Activated CD4-positive, alpha-beta T cell treated with anti-CD3 and anti-CD28 coated beads for 36 hours (primary cell): ENCODE measurements at regions of chr3 and their contacts with region 1.

Region 1: DNA sequence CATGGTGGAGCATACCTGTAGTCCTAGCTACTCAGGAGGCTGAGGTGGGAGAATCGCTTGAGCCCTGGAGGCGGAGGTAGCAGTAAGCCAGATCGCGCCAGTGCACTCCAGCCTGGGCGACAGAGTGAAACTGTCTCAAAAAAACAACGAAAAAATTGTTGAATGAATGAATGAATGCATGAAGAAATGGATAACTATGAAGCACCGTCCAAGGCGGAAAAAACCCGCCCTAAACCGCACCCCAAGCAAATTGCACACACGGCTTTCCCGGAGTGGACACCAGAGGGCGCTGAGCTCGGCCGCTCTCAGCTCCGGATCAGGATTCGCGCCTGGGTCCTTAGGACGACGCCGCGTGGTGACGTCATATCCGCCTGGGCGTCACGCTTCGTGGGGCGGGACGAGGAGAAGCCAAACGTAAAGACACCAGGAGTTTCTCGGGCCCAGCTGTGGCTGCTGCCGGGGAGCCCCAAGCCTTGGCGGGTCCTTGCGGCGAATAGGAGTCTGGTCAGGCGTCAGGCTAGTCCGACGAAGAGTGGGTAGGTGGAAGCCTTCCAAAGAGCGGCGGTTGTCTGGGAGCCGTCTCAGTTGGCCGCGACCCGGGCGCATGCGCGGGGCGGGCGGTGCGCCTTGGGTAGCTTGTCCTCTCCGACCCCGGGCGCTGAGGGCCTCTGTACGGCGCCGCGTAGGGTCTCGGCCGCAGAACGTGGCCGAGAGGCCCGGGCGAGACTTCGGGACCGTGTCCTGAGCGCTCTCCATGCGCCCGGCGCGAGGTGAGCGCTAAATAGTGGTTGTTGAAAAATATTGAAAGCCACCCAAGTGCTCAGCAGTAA is at the starts of genes HTD2 and RPP14:
- DNase-seq: peak; percentile 99
- ATAC-seq: peak; percentile 90
- H3K4me3 Mint-ChIP-seq: peak within 1 kb of the TSS; percentile 97
- H3K27ac Mint-ChIP-seq: peak within 1 kb of the TSS; percentile 97
- H3K4me1 Mint-ChIP-seq: peaks cover 30% of the 10 kb centered on the region
- H3K27me3 Mint-ChIP-seq: peaks cover 2% of the 10 kb centered on the region
- total RNA-seq, gene HTD2: 2.3 to 7.9 TPM
- total RNA-seq, gene RPP14: 16.4 to 16.9 TPM

Region 2: DNA sequence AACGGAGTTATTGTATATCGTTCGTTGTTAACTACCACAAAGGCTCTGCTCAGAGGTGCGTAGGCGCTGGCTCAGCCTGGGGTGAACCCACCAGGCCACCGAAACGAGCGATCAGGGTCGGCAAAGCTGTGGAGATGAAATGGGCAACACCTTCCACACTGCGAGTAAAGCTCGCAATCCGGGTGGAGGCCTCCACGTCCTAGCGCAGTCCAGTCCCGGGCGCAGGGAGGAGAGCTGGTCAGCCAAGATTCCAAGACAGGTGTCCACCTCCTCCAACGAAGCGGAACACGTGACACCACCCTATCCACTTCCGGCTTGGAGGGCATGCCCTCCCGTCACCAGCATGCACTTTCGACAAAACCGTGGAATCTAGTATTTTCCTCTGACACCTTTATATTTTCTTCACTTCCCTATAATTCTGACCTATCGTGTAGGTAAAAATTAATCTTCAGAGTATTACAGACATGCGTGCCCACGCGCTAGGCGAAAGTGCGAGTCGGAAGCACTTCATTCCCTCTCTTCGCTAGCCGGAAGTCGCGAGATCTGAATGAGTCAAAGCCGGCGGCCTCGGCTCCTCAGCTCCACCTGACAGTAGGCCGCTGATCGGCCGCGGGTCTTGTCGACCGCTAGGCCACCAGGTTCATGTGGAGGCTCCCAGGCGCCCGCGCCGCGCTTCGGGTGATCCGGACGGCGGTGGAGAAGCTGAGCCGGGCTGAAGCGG is 750.2 kb before region 1 on chr3 and contains the start of gene PDE12:
- CTCF ChIA-PET with region 1: no interaction called
- POLR2A ChIA-PET with region 1: no interaction called
- intact Hi-C with region 1: loop called in 1 of 2 experiments (anchors 1 kb)
- DNase-seq: peak; percentile 91
- ATAC-seq: peak; percentile 82
- H3K4me3 Mint-ChIP-seq: peak within 1 kb of the TSS; percentile 91
- H3K27ac Mint-ChIP-seq: peak within 1 kb of the TSS; percentile 100
- H3K4me1 Mint-ChIP-seq: peaks cover 29% of the 10 kb centered on the region
- H3K27me3 Mint-ChIP-seq: no peaks in the 10 kb centered on the region
- total RNA-seq, gene PDE12: 19.2 to 19.9 TPM

Region 3: GRCh38 chr3:58177747-58178527 is 128.2 kb before region 1 on chr3:
- CTCF ChIA-PET with region 1: interaction called, 28 read pairs
- POLR2A ChIA-PET with region 1: no interaction called
- intact Hi-C with region 1: loop called in 1 of 2 experiments (anchors 5 kb)
- DNase-seq: peak; percentile 95
- ATAC-seq: peak; percentile 86
- H3K4me3 Mint-ChIP-seq: peak overlapping the region; percentile 61
- H3K27ac Mint-ChIP-seq: peak overlapping the region; percentile 31
- H3K4me1 Mint-ChIP-seq: peaks cover 13% of the 10 kb centered on the region
- H3K27me3 Mint-ChIP-seq: peaks cover 4% of the 10 kb centered on the region

Region 4: GRCh38 chr3:58271901-58272501 is 34.1 kb before region 1 on chr3:
- CTCF ChIA-PET with region 1: interaction called, 11 read pairs
- POLR2A ChIA-PET with region 1: no interaction called
- intact Hi-C with region 1: no loop called
- DNase-seq: peak; percentile 25
- ATAC-seq: peak; percentile 80
- H3K4me3 Mint-ChIP-seq: no peak overlapping the region
- H3K27ac Mint-ChIP-seq: peak overlapping the region; percentile 24
- H3K4me1 Mint-ChIP-seq: peaks cover 11% of the 10 kb centered on the region
- H3K27me3 Mint-ChIP-seq: no peaks in the 10 kb centered on the region

Region 5: DNA sequence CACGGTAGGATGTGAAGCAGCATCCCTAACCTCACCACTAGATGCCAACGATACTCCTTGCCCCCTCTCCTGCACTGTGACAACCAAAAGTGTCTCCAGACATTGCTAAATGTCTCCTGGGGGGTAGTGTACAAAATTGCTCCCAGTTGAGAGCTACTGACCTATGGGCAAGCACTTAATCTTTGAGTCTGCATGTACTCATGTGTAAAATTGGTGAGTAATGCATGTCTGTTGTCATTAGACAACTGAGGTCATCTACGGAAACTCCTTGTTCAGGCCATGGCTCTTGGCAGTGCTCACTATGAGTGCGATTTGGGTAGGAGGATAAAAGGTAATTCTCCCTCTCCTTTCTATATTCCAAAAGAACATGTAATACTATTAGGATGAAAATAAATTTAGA is 98.3 kb after region 1 on chr3:
- CTCF ChIA-PET with region 1: interaction called, 13 read pairs
- POLR2A ChIA-PET with region 1: no interaction called
- intact Hi-C with region 1: no loop called
- DNase-seq: no peak
- ATAC-seq: peak; percentile 16
- H3K4me3 Mint-ChIP-seq: no peak overlapping the region
- H3K27ac Mint-ChIP-seq: peak overlapping the region; percentile 12
- H3K4me1 Mint-ChIP-seq: no peaks in the 10 kb centered on the region
- H3K27me3 Mint-ChIP-seq: no peaks in the 10 kb centered on the region

Region 6: DNA sequence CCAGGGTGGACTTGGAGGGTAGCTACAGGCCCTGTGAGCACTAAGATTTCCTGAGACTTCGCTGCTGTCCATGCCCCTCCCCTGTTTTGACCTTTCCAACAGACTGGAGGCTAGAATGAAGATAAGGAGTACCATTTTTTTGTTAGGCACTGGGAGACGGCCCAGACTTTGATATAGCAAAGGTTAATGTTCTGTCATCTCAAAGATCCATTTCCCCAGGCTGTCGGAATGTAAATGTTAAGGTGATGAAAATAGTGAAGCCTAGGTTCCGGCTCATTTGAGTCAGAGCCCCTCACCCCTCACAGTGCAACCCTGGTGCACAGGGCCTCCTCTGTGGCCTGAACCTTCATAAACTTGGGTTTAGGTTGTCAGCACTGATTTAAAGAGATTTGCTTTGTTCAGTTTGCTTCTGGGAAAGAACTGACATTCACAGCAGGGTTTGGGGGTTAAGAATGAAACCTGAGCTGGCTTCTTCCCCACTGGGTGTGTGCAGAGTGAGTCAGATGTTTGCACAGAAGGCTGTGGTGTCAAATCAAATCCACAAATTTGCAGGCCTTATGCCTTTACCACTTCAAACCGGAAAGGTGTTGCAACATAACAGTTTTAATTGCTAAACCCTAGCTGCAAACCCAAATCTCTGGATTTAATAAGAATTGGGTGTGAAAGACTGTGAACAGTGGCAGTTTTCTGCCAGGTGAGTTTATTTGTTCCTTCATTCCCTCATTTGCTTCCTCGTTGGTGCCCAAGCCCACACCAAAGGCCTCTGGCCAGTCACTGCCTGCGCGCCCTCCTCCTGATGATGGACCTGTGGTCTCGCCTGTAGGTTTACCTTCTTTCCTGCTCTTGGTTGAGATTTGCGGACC is 165.2 kb after region 1 on chr3:
- CTCF ChIA-PET with region 1: interaction called, 8 read pairs
- POLR2A ChIA-PET with region 1: no interaction called
- intact Hi-C with region 1: loop called in 1 of 2 experiments (anchors 1 kb)
- DNase-seq: peak; percentile 82
- ATAC-seq: peak; percentile 96
- H3K4me3 Mint-ChIP-seq: no peak overlapping the region
- H3K27ac Mint-ChIP-seq: peak overlapping the region; percentile 73
- H3K4me1 Mint-ChIP-seq: peaks cover 32% of the 10 kb centered on the region
- H3K27me3 Mint-ChIP-seq: peaks cover 2% of the 10 kb centered on the region

Region 7: GRCh38 chr3:59049671-59050331 is 743.7 kb after region 1 on chr3 and contains the start of gene CFAP20DC:
- CTCF ChIA-PET with region 1: no interaction called
- POLR2A ChIA-PET with region 1: no interaction called
- intact Hi-C with region 1: loop called in 1 of 2 experiments (anchors 5 kb)
- DNase-seq: peak; percentile 97
- ATAC-seq: peak; percentile 99
- H3K4me3 Mint-ChIP-seq: peak within 1 kb of the TSS; percentile 66
- H3K27ac Mint-ChIP-seq: peak within 1 kb of the TSS; percentile 65
- H3K4me1 Mint-ChIP-seq: peaks cover 9% of the 10 kb centered on the region
- H3K27me3 Mint-ChIP-seq: peaks cover 2% of the 10 kb centered on the region
- total RNA-seq, gene CFAP20DC: 2.7 to 3.5 TPM